A673 (cell line): ENCODE measurements at regions of chr2 and their contacts with region 1.

Region 1: DNA sequence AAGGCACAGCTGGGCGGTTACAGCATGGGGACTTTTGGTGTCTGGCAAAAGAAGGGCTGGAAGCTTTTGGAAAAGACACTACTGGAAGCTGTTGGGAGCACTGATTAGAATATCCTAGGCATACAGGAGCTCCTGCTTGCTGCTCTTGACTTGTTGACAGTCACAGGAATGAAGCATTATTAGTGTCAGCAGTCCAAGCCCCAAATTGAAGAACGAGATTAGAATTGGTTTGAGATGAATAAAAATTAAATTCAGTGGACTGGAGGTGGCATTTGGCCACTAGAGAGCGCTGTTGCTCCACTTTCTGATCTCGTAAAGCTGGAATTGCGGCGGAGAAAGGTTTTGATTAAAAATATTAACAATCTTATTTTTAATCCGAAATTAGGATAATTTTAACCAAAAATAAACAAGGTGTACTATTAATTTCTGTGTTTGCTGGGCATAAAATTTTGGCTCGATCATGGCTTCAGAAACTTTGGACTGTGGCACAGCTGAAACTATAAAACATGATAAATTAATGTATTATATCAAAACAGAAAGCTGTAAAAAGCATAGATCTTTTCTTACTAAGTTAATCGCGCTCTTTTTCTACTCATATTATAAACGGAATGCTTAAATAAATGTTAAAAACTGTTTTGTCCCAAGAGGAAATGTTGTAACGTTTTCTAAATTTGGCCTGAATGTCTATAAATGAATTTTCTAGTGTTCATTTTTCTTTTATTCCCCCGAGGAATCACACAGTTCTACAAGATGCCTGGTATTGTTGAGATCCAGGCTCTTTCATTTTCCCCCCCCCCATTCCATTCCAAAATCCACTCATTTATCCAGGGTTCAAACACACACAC is 2.4 kb upstream of the HOXD8 start:
- DNase-seq: peak; percentile 87
- H3K4me3 ChIP-seq: peak overlapping the region; percentile 62
- H3K27ac ChIP-seq: peak overlapping the region; percentile 98
- H3K4me1 ChIP-seq: peaks cover 38% of the 10 kb centered on the region
- H3K27me3 ChIP-seq: no peaks in the 10 kb centered on the region
- CTCF ChIP-seq: peak; percentile 93

Region 2: GRCh38 chr2:174673876-174674275 is 1453.3 kb before region 1 on chr2:
- CTCF ChIA-PET with region 1: no interaction called
- POLR2A ChIA-PET with region 1: no interaction called
- intact Hi-C with region 1: no loop called
- DNase-seq: no peak
- H3K4me3 ChIP-seq: no peak overlapping the region
- H3K27ac ChIP-seq: no peak overlapping the region
- H3K4me1 ChIP-seq: no peaks in the 10 kb centered on the region
- H3K27me3 ChIP-seq: peaks cover 16% of the 10 kb centered on the region
- CTCF ChIP-seq: no peak

Region 3: GRCh38 chr2:176454893-176455811 is 328.0 kb after region 1 on chr2:
- CTCF ChIA-PET with region 1: interaction called, 12 read pairs
- POLR2A ChIA-PET with region 1: no interaction called
- intact Hi-C with region 1: no loop called
- DNase-seq: peak; percentile 85
- H3K4me3 ChIP-seq: no peak overlapping the region
- H3K27ac ChIP-seq: no peak overlapping the region
- H3K4me1 ChIP-seq: peaks cover 14% of the 10 kb centered on the region
- H3K27me3 ChIP-seq: no peaks in the 10 kb centered on the region
- CTCF ChIP-seq: peak; percentile 91

Region 4: GRCh38 chr2:176638167-176639015 is 511.2 kb after region 1 on chr2:
- CTCF ChIA-PET with region 1: interaction called, 6 read pairs
- POLR2A ChIA-PET with region 1: no interaction called
- intact Hi-C with region 1: loop called (anchors 2 kb)
- DNase-seq: peak; percentile 88
- H3K4me3 ChIP-seq: peak overlapping the region; percentile 76
- H3K27ac ChIP-seq: peak overlapping the region; percentile 89
- H3K4me1 ChIP-seq: peaks cover 36% of the 10 kb centered on the region
- H3K27me3 ChIP-seq: no peaks in the 10 kb centered on the region
- CTCF ChIP-seq: peak; percentile 78

Region 5: DNA sequence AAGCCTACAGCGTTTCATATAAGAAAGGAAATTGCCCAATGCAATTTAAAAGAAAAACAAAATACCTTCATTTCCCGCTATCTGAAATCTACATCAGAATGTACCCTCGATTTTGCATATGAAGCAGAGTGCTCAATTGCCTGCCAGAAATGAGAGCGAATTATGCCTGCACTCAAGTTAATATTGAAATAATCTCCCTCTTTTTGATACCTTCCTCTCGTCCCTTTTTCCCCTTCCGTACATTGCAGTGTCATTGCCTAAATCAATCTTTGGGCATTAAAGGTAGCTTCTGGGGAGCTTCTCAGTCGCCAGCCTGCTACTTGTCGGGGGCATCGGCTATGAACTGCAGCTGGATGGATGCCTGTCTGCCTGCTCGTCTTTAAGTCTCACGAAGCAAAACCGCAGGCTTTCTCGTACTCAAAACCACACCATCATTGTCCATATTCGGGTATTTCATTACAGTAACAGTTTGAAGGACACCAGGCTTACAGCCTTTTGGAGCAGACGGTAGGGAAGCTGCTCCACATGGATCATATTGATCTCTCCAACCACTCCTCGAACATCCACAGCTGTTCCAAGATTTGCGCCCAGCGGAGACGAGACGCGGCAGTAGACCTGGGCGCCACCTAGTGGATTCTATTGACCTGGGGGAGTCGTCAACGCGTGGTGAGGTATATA is 1021.5 kb after region 1 on chr2:
- CTCF ChIA-PET with region 1: interaction called, 7 read pairs
- POLR2A ChIA-PET with region 1: interaction called, 6 read pairs
- intact Hi-C with region 1: loop called (anchors 2 kb)
- DNase-seq: peak; percentile 96
- H3K4me3 ChIP-seq: peak overlapping the region; percentile 48
- H3K27ac ChIP-seq: peak overlapping the region; percentile 57
- H3K4me1 ChIP-seq: peaks cover 40% of the 10 kb centered on the region
- H3K27me3 ChIP-seq: no peaks in the 10 kb centered on the region
- CTCF ChIP-seq: peak; percentile 95

Region 6: GRCh38 chr2:177763532-177764265 is 1636.5 kb after region 1 on chr2:
- CTCF ChIA-PET with region 1: no interaction called
- POLR2A ChIA-PET with region 1: no interaction called
- intact Hi-C with region 1: loop called (anchors 10 kb)
- DNase-seq: peak; percentile 90
- H3K4me3 ChIP-seq: no peak overlapping the region
- H3K27ac ChIP-seq: no peak overlapping the region
- H3K4me1 ChIP-seq: no peaks in the 10 kb centered on the region
- H3K27me3 ChIP-seq: no peaks in the 10 kb centered on the region
- CTCF ChIP-seq: peak; percentile 93